Activated CD4-positive, alpha-beta T cell treated with anti-CD3 and anti-CD28 coated beads for 36 hours (primary cell): ENCODE measurements at regions of chr6 and their contacts with region 1.

Region 1: DNA sequence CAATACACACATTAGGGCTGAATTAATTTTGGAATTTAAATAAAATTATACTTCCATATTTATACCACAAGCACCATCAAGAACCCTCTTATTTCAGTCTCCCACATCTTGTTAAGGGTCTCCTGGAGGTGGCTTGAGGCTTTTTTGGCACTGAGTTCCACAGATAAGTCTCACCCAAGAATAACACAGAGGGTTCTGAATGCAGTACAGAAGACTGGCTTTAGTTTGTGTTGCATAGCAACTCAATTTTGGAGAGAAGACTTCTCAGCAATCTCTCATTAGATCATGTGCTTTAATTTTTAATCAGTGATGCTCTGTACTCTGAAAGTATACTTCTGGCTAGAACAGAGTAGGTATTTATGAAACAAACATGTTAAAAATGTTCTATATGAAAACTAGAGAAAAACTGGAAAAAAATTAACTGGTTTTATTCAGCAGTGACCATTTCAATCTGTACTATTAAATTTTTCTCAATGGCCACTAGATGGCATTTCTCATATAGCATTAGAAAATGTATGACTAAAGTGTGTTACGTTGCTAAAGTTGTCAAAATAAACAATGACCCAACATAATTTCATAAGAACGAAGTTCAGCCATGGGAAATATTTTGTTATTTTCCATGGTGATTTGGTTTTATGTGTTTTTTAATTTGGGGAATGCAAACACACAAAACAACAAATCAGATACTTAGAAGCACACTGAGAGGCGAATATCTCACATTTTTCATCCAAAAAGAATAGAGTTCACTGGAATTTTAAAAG is 32.7 kb upstream of the MAP7 start:
- DNase-seq: no peak
- ATAC-seq: no peak
- H3K4me3 Mint-ChIP-seq: no peak overlapping the region
- H3K27ac Mint-ChIP-seq: no peak overlapping the region
- H3K4me1 Mint-ChIP-seq: no peaks in the 10 kb centered on the region
- H3K27me3 Mint-ChIP-seq: no peaks in the 10 kb centered on the region

Region 2: DNA sequence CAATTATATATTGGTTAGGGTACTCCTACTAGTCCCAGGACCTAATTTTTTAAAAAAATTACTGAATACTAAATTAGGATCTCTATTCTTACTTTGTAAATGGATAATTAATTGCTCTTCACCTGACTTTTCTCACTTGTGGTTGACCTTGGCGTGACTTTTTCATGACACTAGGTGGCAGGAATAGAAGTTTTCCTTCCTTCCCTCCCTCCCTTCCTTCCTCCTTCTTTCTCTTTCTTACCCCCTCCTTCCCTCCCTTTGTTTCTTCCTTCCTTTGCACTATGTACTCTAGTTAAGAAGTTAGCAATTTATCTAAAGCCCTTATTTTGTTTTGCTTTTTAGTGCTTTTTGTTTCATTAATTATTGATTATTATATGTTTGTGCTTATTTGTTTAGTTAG is 1507.9 kb before region 1 on chr6:
- CTCF ChIA-PET with region 1: no interaction called
- POLR2A ChIA-PET with region 1: no interaction called
- intact Hi-C with region 1: loop called in 1 of 2 experiments (anchors 5 kb)
- DNase-seq: no peak
- ATAC-seq: no peak
- H3K4me3 Mint-ChIP-seq: no peak overlapping the region
- H3K27ac Mint-ChIP-seq: no peak overlapping the region
- H3K4me1 Mint-ChIP-seq: peaks cover 15% of the 10 kb centered on the region
- H3K27me3 Mint-ChIP-seq: no peaks in the 10 kb centered on the region

Region 3: GRCh38 chr6:136487749-136488425 is 95.0 kb before region 1 on chr6:
- CTCF ChIA-PET with region 1: no interaction called
- POLR2A ChIA-PET with region 1: no interaction called
- intact Hi-C with region 1: no loop called
- DNase-seq: no peak
- ATAC-seq: no peak
- H3K4me3 Mint-ChIP-seq: no peak overlapping the region
- H3K27ac Mint-ChIP-seq: no peak overlapping the region
- H3K4me1 Mint-ChIP-seq: no peaks in the 10 kb centered on the region
- H3K27me3 Mint-ChIP-seq: no peaks in the 10 kb centered on the region